ENCODE measurements at regions of chr21 and their contacts with region 1.

Region 1: DNA sequence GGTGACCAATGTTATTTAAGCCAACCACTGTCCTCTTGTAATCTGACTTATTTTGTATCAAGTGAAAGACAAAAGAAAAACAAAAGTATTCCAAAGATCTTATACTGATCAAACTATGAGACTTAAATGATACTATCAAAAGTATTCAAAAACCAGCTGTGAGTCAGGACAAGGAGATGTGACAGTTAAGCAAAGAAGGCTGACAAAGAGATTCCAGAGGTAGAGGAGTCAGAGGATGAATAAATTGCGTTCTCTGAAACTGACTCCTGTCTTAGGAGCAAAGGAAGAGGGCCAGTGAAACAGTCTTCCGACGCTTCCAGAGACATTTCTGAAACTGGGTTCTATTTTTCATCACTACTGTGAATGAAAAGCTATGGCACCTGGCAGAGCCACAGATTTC is 20.9 kb downstream of the TMEM50B start:
- DNase-seq: no peak
- ATAC-seq: no peak
- H3K4me3 ChIP-seq: no peak overlapping the region
- H3K27ac ChIP-seq: no peak overlapping the region
- H3K4me1 ChIP-seq: no peaks in the 10 kb centered on the region
- H3K27me3 ChIP-seq: no peaks in the 10 kb centered on the region
- CTCF ChIP-seq: no peak

Region 2: DNA sequence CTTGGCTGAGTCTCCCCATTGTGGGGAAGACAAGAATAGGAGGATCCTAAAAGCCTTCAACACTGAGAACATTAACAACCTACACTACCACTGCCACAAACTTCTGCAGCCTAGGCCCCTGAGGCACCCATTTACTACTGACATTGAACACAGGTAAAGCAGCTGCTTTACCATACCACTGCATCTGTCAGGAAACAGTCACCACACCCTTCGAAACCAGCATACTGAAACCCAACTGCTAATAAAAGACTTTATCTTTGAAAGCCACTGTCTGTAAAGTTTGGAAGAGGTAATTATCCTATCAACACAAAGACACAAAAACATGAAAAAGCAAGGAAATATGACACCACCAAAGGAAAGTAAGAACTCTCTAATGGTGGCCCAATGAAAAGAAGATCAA is 126.7 kb before region 1 on chr21:
- CTCF ChIA-PET with region 1: no interaction called
- POLR2A ChIA-PET with region 1: interaction called, 10 read pairs
- intact Hi-C with region 1: no loop called
- DNase-seq: no peak
- ATAC-seq: no peak
- H3K4me3 ChIP-seq: no peak overlapping the region
- H3K27ac ChIP-seq: no peak overlapping the region
- H3K4me1 ChIP-seq: no peaks in the 10 kb centered on the region
- H3K27me3 ChIP-seq: no peaks in the 10 kb centered on the region
- CTCF ChIP-seq: no peak

Region 3: GRCh38 chr21:33380483-33380998 is 78.3 kb before region 1 on chr21:
- CTCF ChIA-PET with region 1: no interaction called
- POLR2A ChIA-PET with region 1: no interaction called
- intact Hi-C with region 1: no loop called
- DNase-seq: peak; percentile 99
- ATAC-seq: peak; percentile 90
- H3K4me3 ChIP-seq: no peak overlapping the region
- H3K27ac ChIP-seq: peak overlapping the region; percentile 95
- H3K4me1 ChIP-seq: peaks cover 41% of the 10 kb centered on the region
- H3K27me3 ChIP-seq: no peaks in the 10 kb centered on the region
- CTCF ChIP-seq: no peak

Measured in PC-3 (cell line).